Activated T-helper 1 cell treated with anti-CD3 and anti-CD28 coated beads, Interleukin-12 subunit alpha, Interleukin-12 subunit beta, Interleukin-2, Interleukin-4 antibody, amounts not matched to agents 30 ng/mL and 10 ng/mL and 1 ng/mL, durations not matched to agents 14 hours and 24 hours and 36 hours (primary cell): ENCODE measurements at regions of chr3 and their contacts with region 1.

Region 1: DNA sequence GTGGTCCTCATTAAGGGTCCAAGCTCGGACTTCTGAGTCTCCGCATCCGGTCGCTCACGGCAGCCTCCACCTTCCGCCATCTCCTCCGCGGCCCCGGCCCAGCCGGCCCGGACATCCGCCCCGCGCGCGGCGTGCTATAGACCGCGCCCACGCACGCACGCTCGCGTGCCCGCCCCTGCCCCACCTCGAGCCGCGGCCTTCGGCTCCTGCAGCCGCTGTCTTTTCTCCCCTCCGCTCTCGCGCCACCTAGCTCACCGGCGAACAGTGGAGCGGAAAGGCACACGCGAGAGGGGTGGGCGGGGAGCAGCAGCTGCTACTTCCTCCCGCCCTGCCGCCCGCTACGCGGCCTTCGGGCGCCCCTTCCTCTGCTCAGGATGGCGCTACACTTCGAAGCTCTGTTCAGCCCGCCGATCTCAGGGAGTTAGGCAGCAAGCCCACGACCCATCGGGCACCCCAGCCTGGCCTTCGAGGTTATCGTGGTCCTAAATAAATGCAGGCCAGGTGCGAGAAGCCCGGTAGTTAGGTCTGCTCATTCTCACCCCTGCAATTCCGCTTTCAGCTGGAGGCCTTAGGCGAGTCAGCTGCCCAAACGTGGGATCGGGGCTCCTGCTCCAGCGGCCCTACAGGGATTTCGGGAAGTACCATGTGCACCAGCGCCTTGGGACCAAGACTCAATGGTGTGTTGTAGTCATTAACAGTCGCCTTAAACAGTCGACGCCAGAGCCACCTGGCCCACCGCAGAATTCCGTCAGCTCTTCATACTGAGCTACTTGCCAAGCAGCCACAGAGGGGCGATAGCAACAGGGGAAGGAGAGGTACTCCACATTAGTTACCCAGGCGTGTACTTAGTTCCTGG is at the start of gene USP4:
- DNase-seq: peak; percentile 93
- H3K4me3 Mint-ChIP-seq: peak within 1 kb of the TSS; percentile 92
- H3K27ac Mint-ChIP-seq: peak within 1 kb of the TSS; percentile 100
- H3K4me1 Mint-ChIP-seq: peaks cover 45% of the 10 kb centered on the region
- H3K27me3 Mint-ChIP-seq: no peaks in the 10 kb centered on the region
- total RNA-seq, gene USP4: 84.4 and 90.2 TPM in 2 replicates

Region 2: DNA sequence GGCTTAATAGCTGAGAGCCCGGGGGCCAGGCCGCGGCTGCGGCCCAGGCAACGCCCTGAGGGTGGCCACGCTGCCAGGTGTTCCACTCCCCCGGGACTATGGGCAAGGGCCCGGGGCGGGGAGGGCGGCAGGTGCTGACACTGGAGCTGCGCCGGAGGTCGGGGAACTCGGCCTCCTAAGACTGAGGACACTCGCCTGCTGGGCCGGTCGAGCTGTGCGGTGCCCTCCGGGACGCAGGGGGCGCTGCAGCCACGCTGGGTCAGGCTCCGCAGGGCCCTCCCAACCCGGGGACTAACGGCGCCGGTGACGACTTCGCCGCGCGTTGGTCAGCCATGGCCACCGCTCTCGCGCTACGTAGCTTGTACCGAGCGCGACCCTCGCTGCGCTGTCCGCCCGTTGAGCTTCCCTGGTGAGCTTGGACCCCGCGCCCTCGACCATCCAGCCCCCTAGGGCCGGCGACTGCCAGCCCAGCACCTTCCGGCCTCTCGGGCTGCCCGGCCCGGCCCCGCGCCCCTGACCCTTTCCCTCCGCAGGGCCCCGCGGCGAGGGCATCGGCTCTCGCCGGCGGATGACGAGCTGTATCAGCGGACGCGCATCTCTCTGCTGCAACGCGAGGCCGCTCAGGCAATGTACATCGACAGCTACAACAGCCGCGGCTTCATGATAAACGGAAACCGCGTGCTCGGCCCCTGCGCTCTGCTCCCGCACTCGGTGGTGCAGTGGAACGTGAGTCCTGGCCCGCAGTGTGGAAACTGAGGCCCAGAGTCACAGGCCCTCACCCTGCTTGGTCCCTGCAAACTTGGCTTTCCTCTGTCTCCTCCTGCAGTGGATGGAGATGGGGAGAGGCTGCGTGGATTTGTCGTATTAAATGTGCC is 318.1 kb before region 1 on chr3 and contains the start of gene NDUFAF3:
- intact Hi-C with region 1: loop called (anchors 5 kb)
- DNase-seq: peak; percentile 91
- H3K4me3 Mint-ChIP-seq: peak within 1 kb of the TSS; percentile 91
- H3K27ac Mint-ChIP-seq: peak within 1 kb of the TSS; percentile 99
- H3K4me1 Mint-ChIP-seq: peaks cover 41% of the 10 kb centered on the region
- H3K27me3 Mint-ChIP-seq: no peaks in the 10 kb centered on the region
- total RNA-seq, gene NDUFAF3: 126 and 129 TPM in 2 replicates

Region 3: DNA sequence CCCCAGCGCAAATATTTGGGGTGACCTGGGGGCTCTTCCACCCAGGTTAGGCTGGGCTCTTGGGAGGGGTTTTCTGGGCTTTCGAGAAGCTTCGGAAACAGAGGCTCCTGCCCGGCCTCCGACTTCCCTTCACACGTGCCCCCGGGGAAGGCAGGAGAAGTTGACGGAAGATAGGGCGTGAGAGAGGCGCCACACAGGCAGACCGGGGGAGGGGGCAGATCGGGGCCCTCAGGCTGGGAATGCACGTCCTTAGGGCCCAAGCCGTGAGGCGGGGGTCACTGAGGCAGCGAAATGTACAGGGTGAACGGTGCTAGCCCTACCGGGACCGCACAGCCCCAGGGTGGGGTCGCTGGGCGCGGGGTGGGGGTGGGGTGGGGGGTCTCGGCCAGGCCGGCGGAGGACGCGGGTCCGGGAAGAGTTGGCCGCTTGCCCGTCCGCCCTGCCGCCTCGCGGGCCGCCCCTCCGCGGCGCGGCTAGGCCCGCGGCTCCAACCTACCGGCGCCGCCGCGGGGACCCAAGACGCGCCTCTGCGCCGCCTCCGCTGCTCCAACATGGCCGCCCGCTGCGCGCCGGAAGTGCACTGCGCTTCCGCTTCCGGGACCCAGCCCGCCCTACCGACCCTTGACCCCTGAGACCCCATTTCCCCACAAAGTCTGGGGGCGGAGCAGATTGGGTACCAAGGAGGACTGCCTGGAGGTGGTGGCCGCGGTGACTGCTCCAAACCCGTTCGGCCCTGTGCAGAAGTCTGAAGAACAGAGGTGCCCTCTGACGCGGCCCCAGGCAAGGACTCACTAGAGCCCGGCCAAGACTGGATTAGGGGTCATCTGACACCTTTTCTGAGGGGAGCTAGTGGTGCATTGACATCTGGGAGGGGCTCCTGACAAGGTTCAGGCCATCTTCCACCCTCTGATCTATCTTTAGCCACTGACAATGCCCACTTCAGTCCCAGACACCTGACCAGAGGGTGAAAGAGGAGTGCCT is 174.1 kb before region 1 on chr3 and contains the start of gene CCDC71:
- intact Hi-C with region 1: loop called (anchors 1 kb)
- DNase-seq: peak; percentile 71
- H3K4me3 Mint-ChIP-seq: peak within 1 kb of the TSS; percentile 97
- H3K27ac Mint-ChIP-seq: peak within 1 kb of the TSS; percentile 88
- H3K4me1 Mint-ChIP-seq: peaks cover 18% of the 10 kb centered on the region
- H3K27me3 Mint-ChIP-seq: no peaks in the 10 kb centered on the region
- total RNA-seq, gene CCDC71: 27.6 and 29.1 TPM in 2 replicates

Region 4: DNA sequence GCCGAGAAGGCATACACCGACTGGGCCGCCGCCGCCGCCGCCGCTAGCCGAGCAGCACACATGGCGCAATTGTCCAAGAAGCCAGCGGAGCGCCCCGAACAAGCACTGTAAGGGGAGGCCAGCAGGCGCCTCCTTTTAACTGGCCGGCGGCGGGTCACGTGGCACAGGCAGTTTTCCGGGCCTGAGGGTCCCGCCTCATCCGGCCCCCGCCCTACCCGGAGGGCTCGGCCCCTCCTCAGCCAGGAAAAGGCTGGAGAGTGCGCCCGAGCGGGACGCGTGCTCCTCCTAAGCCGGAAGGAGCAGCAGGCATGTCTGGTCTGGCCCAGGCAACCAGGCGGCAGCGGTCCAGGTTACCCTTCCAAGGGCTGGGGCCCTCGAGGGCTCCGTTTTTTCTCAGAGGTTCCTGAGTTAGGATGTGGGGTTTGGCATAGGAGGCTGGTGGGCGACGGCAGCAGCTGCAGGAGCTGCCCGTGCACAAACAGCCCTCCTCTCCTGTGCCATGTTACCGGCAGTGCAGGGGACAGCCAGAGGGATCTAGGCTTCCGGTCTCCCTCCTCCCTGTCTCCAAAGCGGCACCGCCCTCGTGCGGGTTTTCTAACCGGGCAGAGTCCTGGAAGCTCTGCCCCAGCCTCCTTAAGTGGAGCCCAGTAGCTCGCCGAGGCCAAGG is 18.2 kb after region 1 on chr3 and contains the start of gene GPX1:
- intact Hi-C with region 1: loop called (anchors 1 kb)
- DNase-seq: peak; percentile 83
- H3K4me3 Mint-ChIP-seq: peak within 1 kb of the TSS; percentile 94
- H3K27ac Mint-ChIP-seq: peak within 1 kb of the TSS; percentile 90
- H3K4me1 Mint-ChIP-seq: peaks cover 27% of the 10 kb centered on the region
- H3K27me3 Mint-ChIP-seq: no peaks in the 10 kb centered on the region
- total RNA-seq, gene GPX1: 181 and 188 TPM in 2 replicates

Region 5: DNA sequence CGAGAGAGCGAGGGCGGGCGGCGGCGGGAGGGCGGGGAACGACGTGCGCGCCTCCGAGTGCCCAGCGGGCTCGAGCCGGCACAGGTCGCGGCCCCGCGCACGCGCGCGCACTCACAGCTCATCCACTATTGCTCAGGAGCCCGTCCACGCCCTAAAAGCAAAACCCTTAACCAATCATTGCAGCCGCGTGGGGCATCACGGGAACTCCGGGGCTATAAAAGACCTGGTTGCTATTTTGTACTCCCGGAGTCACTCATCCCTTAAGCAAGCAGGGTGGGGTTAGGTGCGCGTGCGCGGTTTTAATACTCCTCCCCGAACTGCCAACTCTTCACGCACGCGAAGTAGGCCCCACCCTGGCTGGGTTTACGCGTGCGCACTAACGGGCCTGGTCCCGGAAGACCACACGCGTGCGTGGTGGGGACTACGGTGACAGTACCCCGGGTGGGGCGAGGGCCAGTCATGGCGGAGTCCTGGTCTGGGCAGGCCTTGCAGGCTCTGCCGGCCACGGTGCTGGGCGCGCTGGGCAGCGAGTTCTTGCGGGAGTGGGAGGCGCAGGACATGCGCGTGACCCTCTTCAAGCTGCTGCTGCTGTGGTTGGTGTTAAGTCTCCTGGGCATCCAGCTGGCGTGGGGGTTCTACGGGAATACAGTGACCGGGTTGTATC is 71.9 kb after region 1 on chr3 and contains the starts of genes RHOA and TCTA:
- intact Hi-C with region 1: loop called (anchors 1 kb)
- DNase-seq: peak; percentile 99
- H3K4me3 Mint-ChIP-seq: peak within 1 kb of the TSS; percentile 98
- H3K27ac Mint-ChIP-seq: peak within 1 kb of the TSS; percentile 96
- H3K4me1 Mint-ChIP-seq: peaks cover 71% of the 10 kb centered on the region
- H3K27me3 Mint-ChIP-seq: no peaks in the 10 kb centered on the region
- total RNA-seq, gene RHOA: 376 and 381 TPM in 2 replicates
- total RNA-seq, gene TCTA: 27.8 and 30.0 TPM in 2 replicates

Region 6: DNA sequence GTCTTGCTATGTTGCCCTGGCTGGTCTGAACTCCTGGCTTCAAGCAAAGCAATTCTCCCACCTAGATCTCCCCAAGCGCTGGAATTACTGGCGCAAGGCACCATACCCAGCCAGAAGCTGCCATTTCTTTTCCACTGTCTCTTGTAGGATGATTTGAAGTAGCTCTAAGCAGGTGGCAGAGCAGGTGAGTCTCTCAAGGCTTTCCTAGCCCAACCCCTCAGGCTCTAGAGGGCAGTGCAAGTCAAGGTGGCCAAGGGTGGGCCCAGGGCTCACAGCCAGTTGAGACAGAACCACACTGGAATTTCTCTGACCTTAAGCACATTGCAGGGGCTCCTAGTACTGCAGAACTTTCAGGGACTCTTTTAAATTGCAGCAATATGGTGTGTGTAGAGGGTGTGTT is 114.3 kb after region 1 on chr3:
- intact Hi-C with region 1: loop called (anchors 1 kb)
- DNase-seq: no peak
- H3K4me3 Mint-ChIP-seq: no peak overlapping the region
- H3K27ac Mint-ChIP-seq: no peak overlapping the region
- H3K4me1 Mint-ChIP-seq: no peaks in the 10 kb centered on the region
- H3K27me3 Mint-ChIP-seq: no peaks in the 10 kb centered on the region

Region 7: GRCh38 chr3:49673715-49674496 is 333.7 kb after region 1 on chr3 and contains the start of gene APEH:
- intact Hi-C with region 1: loop called (anchors 5 kb)
- DNase-seq: peak; percentile 96
- H3K4me3 Mint-ChIP-seq: peak within 1 kb of the TSS; percentile 87
- H3K27ac Mint-ChIP-seq: peak within 1 kb of the TSS; percentile 96
- H3K4me1 Mint-ChIP-seq: peaks cover 19% of the 10 kb centered on the region
- H3K27me3 Mint-ChIP-seq: no peaks in the 10 kb centered on the region
- total RNA-seq, gene APEH: 113 and 115 TPM in 2 replicates